Activated CD8-positive, alpha-beta T cell treated with anti-CD3 and anti-CD28 coated beads for 36 hours (primary cell): ENCODE measurements at regions of chr11 and their contacts with region 1.

Region 1: DNA sequence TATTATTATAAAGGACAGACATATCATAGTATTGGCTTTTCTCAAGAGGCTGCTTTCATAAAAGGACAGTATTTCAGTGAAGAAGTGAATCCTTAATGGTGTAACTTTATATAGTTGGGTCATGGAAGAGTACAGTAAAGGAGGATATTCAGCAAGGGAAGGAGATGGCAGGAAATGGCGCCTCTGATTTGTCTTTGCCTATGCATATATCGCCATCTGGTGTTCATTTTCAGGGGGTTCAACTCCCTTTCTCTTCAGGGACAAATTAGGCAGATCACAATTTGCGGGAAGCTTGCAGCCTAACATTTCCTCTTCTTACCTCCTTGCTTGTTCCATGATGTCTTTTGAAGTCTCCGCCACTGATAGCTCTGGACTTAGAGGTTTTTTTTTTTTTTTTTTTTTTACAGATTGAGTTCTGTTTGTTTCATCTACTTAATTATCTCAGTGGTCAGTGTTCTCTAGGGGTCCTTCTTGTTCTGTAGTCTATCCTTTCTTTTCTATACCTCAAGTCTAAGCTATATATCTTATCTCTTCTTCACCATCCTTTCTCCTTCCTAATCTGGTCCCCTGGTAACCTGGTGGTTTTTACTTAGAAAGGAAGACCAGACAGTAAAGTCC is 21.8 kb upstream of the RRM1 start:
- DNase-seq: peak; percentile 49
- ATAC-seq: peak; percentile 72
- H3K4me3 Mint-ChIP-seq: no peak overlapping the region
- H3K27ac Mint-ChIP-seq: peak overlapping the region; percentile 74
- H3K4me1 Mint-ChIP-seq: peaks cover 35% of the 10 kb centered on the region
- H3K27me3 Mint-ChIP-seq: no peaks in the 10 kb centered on the region
- CTCF ChIP-seq: peak; percentile 78

Region 2: DNA sequence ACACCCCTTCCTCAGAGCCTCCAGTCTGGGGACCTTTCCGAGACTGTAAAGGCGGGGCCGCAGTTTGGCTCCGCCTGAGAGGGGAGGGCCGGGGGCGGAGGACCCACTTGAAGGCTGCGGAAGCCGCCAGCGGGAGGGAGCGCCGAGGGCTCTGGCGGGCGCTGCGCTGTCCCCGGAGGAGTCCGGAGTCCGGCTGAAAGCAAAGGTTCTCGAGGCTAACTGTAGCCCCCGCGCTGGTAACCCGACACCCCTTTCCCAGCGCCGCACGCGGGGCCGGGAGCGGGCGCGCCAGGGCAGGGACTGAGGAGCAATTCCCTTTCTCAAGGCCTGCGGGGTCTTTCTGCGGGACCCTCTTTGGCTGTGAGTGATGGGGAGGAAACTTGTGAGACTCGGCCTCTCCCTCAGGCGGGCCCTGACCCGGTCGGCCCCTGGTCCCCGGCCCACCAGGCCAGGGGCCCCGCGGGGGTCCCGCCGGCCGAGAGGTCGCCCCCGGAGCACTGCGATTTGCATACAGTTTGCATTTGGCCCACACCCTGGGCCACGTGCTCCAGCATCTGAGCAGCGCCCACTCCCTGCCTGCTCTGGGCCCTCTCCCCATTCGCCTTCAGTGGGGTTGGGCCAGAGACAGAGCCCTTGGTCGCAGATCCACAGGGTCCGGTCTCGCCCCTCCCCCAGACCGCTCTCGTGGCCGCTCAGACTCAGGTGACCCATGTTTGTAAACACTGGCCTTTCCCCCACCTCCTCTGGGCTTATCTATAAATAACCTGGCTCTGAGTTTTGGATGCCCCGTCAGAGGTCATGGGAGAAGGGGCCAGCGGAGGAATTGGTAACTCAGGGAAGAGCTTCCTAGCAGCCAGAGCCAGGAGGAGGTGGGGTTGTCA is 430.5 kb before region 1 on chr11:
- CTCF ChIA-PET with region 1: no interaction called
- POLR2A ChIA-PET with region 1: no interaction called
- intact Hi-C with region 1: no loop called
- DNase-seq: peak; percentile 52
- ATAC-seq: peak; percentile 89
- H3K4me3 Mint-ChIP-seq: peak overlapping the region; percentile 44
- H3K27ac Mint-ChIP-seq: no peak overlapping the region
- H3K4me1 Mint-ChIP-seq: peaks cover 9% of the 10 kb centered on the region
- H3K27me3 Mint-ChIP-seq: peaks cover 43% of the 10 kb centered on the region
- CTCF ChIP-seq: no peak

Region 3: GRCh38 chr11:3797329-3798095 is 275.3 kb before region 1 on chr11 and contains the start of gene NUP98:
- CTCF ChIA-PET with region 1: interaction called, 10 read pairs
- POLR2A ChIA-PET with region 1: no interaction called
- intact Hi-C with region 1: no loop called
- DNase-seq: peak; percentile 100
- ATAC-seq: peak; percentile 98
- H3K4me3 Mint-ChIP-seq: peak within 1 kb of the TSS; percentile 90
- H3K27ac Mint-ChIP-seq: peak within 1 kb of the TSS; percentile 99
- H3K4me1 Mint-ChIP-seq: peaks cover 43% of the 10 kb centered on the region
- H3K27me3 Mint-ChIP-seq: no peaks in the 10 kb centered on the region
- CTCF ChIP-seq: no peak
- total RNA-seq, gene NUP98: 88.4 to 89.9 TPM

Region 4: GRCh38 chr11:3849297-3849874 is 223.4 kb before region 1 on chr11:
- CTCF ChIA-PET with region 1: interaction called, 775 read pairs
- POLR2A ChIA-PET with region 1: interaction called, 26 read pairs
- intact Hi-C with region 1: loop called (anchors 2 kb)
- DNase-seq: peak; percentile 61
- ATAC-seq: peak; percentile 58
- H3K4me3 Mint-ChIP-seq: no peak overlapping the region
- H3K27ac Mint-ChIP-seq: peak overlapping the region; percentile 35
- H3K4me1 Mint-ChIP-seq: peaks cover 51% of the 10 kb centered on the region
- H3K27me3 Mint-ChIP-seq: no peaks in the 10 kb centered on the region
- CTCF ChIP-seq: peak; percentile 79

Region 5: DNA sequence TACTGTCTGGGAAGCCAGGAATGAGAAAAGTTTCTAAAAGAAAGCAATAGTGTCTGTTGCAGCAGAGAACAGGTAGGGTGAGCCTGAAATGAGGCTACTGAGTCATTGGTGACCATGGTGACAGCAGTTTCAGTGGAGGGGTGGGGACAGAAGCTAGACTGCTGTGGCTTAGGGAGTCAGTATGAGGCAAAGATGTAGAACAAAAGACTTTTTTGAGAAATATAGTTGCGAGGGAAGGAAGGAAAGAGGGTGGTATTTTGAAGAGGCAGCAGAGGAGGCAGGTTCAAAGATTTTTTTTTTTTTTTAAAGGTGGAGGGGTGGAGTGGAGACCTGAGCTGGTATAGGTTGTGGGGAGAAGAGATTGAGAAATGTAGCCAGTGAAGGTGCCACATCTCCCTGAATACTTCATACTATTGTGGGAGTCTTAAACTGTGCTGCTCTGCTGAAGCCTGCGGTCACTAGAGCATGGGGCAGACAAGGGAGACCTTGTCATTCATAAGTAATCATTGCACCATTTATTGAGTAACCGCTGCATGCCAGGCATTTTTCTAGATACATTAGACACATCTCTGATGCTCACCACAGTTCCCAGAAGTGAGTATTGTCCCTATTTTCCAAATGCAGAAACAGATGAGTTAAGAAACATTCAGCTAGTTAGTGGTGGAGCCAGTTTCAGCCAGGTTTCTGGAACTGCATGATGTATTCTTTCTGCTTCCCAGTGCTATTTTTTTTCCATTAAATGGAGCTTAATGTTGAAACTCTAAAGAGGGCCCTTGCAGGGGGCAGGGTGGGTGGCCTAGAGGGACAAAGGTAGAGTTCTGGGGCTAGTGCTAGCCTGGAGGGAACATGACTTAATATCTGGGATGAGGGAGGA is 167.5 kb before region 1 on chr11:
- CTCF ChIA-PET with region 1: interaction called, 23 read pairs
- POLR2A ChIA-PET with region 1: no interaction called
- intact Hi-C with region 1: no loop called
- DNase-seq: peak; percentile 83
- ATAC-seq: peak; percentile 97
- H3K4me3 Mint-ChIP-seq: no peak overlapping the region
- H3K27ac Mint-ChIP-seq: peak overlapping the region; percentile 74
- H3K4me1 Mint-ChIP-seq: peaks cover 77% of the 10 kb centered on the region
- H3K27me3 Mint-ChIP-seq: no peaks in the 10 kb centered on the region
- CTCF ChIP-seq: no peak

Region 6: GRCh38 chr11:3959015-3959919 is 113.5 kb before region 1 on chr11:
- CTCF ChIA-PET with region 1: interaction called, 11 read pairs
- POLR2A ChIA-PET with region 1: interaction called, 5 read pairs
- intact Hi-C with region 1: no loop called
- DNase-seq: no peak
- ATAC-seq: peak; percentile 64
- H3K4me3 Mint-ChIP-seq: no peak overlapping the region
- H3K27ac Mint-ChIP-seq: no peak overlapping the region
- H3K4me1 Mint-ChIP-seq: peaks cover 77% of the 10 kb centered on the region
- H3K27me3 Mint-ChIP-seq: no peaks in the 10 kb centered on the region
- CTCF ChIP-seq: peak; percentile 11

Region 7: DNA sequence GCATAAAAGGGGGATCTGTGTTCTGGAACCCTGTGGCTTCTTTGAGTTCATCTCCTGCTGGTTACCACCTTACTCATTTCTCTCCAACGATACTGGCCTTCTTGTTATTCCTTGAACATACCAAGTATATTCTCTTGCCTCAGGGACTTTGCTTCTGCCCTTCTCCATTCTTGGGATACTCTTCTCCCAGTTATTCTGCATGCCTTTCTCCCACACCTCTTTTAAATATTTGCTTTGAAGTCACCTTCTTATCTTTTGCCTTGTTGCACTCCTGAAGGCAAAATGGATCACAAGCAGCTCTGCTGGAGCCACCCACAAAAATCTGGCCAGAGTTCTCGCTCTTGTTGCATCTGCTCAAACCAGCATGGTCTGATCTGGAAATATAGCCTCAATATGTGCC is 54.1 kb before region 1 on chr11:
- CTCF ChIA-PET with region 1: interaction called, 21 read pairs
- POLR2A ChIA-PET with region 1: no interaction called
- intact Hi-C with region 1: no loop called
- DNase-seq: no peak
- ATAC-seq: no peak
- H3K4me3 Mint-ChIP-seq: no peak overlapping the region
- H3K27ac Mint-ChIP-seq: no peak overlapping the region
- H3K4me1 Mint-ChIP-seq: peaks cover 52% of the 10 kb centered on the region
- H3K27me3 Mint-ChIP-seq: no peaks in the 10 kb centered on the region
- CTCF ChIP-seq: no peak

Region 8: GRCh38 chr11:4087551-4087950 is 14.8 kb after region 1 on chr11:
- CTCF ChIA-PET with region 1: interaction called, 59 read pairs
- POLR2A ChIA-PET with region 1: interaction called, 4 read pairs
- intact Hi-C with region 1: no loop called
- DNase-seq: no peak
- ATAC-seq: no peak
- H3K4me3 Mint-ChIP-seq: no peak overlapping the region
- H3K27ac Mint-ChIP-seq: peak overlapping the region; percentile 51
- H3K4me1 Mint-ChIP-seq: peaks cover 48% of the 10 kb centered on the region
- H3K27me3 Mint-ChIP-seq: no peaks in the 10 kb centered on the region
- CTCF ChIP-seq: no peak

Region 9: DNA sequence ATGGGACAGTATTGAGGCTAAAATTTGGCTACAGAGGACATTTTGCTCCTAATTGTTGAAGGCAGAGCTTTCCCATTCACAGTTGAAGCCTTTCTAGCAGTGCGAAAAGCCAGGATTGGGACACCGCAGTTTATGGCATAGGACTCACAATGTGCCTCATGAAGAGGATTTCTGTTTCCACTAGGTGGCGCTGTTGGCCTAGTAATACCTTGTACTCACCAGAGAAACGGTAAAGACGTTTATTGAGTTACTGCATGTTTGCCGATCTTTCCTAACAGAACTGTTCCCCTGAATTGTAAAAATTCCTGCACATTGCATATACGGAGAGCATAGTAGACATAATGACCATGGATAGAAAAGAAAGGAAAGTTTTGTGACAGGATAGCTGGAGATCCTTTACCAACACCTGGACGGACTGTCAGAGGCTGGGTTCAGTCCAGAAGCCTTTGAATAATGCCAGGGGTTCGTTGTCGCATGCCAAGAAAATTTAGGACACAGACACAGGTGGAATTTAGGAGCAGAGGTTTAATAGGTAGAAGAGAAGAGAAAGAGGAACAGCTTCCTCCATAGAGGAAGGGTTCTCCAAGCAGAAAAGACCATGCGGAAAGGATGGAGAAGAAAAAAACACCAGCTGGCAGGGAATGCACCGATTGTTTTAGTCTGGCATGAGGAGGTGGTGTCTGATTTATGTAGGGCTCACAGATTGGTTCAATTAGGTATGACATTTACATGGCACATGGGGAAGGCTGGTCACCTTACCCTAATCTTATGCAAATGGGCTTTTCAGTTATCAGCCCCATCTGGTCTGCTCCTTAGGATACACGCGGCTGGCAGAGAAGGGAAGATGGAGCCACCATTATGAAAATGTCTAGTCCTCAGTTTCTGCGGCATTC is 553.7 kb after region 1 on chr11:
- CTCF ChIA-PET with region 1: no interaction called
- POLR2A ChIA-PET with region 1: no interaction called
- intact Hi-C with region 1: no loop called
- DNase-seq: peak; percentile 78
- ATAC-seq: peak; percentile 51
- H3K4me3 Mint-ChIP-seq: no peak overlapping the region
- H3K27ac Mint-ChIP-seq: no peak overlapping the region
- H3K4me1 Mint-ChIP-seq: no peaks in the 10 kb centered on the region
- H3K27me3 Mint-ChIP-seq: peaks cover 36% of the 10 kb centered on the region
- CTCF ChIP-seq: peak; percentile 77